Left lung (tissue), 14 donors: ENCODE measurements at regions of chr5 and their contacts with region 1.

Region 1: GRCh38 chr5:180860887-180861822 is at the start of gene ZFP62:
- DNase-seq: peak; percentile 86 to 99 (median 93)
- ATAC-seq: peak; percentile 96
- H3K4me3 ChIP-seq: peak within 1 kb of the TSS; percentile 89 to 99
- H3K27ac ChIP-seq: peak within 1 kb of the TSS; percentile 90 to 91
- H3K4me1 ChIP-seq: peaks cover 4 to 18% of the 10 kb centered on the region in 2 donors
- H3K27me3 ChIP-seq: no peaks in the 10 kb centered on the region
- CTCF ChIP-seq: peak in 1 of 2 donors; percentile 33
- polyA plus RNA-seq, gene ZFP62: 54.9 to 66.1 (median 60.6) TPM

Region 2: GRCh38 chr5:180784497-180785097 is 76.6 kb before region 1 on chr5:
- intact Hi-C with region 1: loop called in 1 of 2 experiments (anchors 5 kb)
- DNase-seq: peak in 3 of 4 donors; percentile 70 to 87 (median 79)
- ATAC-seq: peak; percentile 89
- H3K4me3 ChIP-seq: no peak overlapping the region
- H3K27ac ChIP-seq: peak overlapping the region; percentile 61 to 81
- H3K4me1 ChIP-seq: peaks cover 21 to 45% of the 10 kb centered on the region in 2 donors
- H3K27me3 ChIP-seq: no peaks in the 10 kb centered on the region
- CTCF ChIP-seq: peak; percentile 62 to 73

Region 3: GRCh38 chr5:181207214-181208107 is 346.3 kb after region 1 on chr5:
- intact Hi-C with region 1: no loop called
- DNase-seq: peak; percentile 74 to 85 (median 78)
- ATAC-seq: peak; percentile 46
- H3K4me3 ChIP-seq: peak overlapping the region; percentile 40 to 56
- H3K27ac ChIP-seq: peak overlapping the region; percentile 72 to 74
- H3K4me1 ChIP-seq: peaks cover 19 to 52% of the 10 kb centered on the region in 2 donors
- H3K27me3 ChIP-seq: peaks cover 0 to 48% of the 10 kb centered on the region in 2 donors
- CTCF ChIP-seq: no peak

Region 4: GRCh38 chr5:181271081-181271480 is 409.9 kb after region 1 on chr5:
- intact Hi-C with region 1: no loop called
- DNase-seq: no peak
- ATAC-seq: no peak
- H3K4me3 ChIP-seq: no peak overlapping the region
- H3K27ac ChIP-seq: no peak overlapping the region
- H3K4me1 ChIP-seq: no peaks in the 10 kb centered on the region
- H3K27me3 ChIP-seq: no peaks in the 10 kb centered on the region
- CTCF ChIP-seq: no peak